ENCODE measurements at regions of chrX and their contacts with region 1.

Region 1: GRCh38 chrX:13167481-13168231 is 123.2 kb upstream of the FAM9C start:
- DNase-seq: no peak
- H3K4me3 ChIP-seq: no peak overlapping the region
- H3K27me3 ChIP-seq: no peaks in the 10 kb centered on the region
- CTCF ChIP-seq: no peak

Region 2: DNA sequence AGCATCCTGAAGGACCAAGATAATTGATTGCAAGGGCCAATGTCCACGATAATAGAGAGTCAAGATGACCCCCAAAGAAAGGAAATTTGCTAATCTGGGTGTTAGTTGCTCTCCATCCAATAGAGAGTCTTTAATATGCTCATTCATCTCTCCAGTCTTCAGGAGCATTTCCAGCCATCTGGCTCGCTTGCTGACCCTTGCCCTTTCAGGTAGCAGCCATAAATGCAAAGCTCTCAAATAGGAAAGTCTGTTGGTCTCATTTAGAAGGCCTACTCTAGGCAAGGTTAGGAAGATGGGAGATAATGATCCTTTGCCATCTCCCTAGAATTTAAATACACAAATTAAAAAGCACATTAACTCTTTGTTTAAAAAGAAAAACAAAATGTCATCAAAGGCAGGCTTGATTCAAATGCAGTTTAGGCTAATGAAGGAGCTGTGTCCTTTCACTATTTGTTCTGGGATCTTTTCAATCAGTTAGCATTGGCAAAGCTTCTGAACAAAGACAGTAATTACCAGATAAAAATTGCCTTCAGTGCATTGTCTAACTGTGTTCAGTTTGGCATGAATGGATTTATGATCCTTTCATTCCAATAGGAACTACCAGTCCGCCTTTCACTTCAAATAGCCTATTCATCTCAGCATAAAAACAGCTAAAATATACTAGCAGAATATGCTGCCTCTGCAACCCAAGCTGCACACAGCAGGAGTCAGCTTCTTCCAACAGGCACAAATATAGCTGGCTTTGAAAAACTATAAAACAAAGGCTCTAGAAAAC is 201.8 kb after region 1 on chrX:
- CTCF ChIA-PET with region 1: no interaction called
- POLR2A ChIA-PET with region 1: interaction called, 12 read pairs
- DNase-seq: no peak
- H3K4me3 ChIP-seq: no peak overlapping the region
- H3K27me3 ChIP-seq: no peaks in the 10 kb centered on the region
- CTCF ChIP-seq: no peak

Region 3: GRCh38 chrX:13401724-13402123 is 234.1 kb after region 1 on chrX:
- CTCF ChIA-PET with region 1: no interaction called
- POLR2A ChIA-PET with region 1: no interaction called
- DNase-seq: no peak
- H3K4me3 ChIP-seq: no peak overlapping the region
- H3K27me3 ChIP-seq: no peaks in the 10 kb centered on the region
- CTCF ChIP-seq: no peak